Posterior vena cava (tissue), 2 donors: ENCODE measurements at regions of chr1 and their contacts with region 1.

Region 1: GRCh38 chr1:108780937-108781574 is 34.6 kb downstream of the STXBP3 start:
- DNase-seq: no peak

Region 2: DNA sequence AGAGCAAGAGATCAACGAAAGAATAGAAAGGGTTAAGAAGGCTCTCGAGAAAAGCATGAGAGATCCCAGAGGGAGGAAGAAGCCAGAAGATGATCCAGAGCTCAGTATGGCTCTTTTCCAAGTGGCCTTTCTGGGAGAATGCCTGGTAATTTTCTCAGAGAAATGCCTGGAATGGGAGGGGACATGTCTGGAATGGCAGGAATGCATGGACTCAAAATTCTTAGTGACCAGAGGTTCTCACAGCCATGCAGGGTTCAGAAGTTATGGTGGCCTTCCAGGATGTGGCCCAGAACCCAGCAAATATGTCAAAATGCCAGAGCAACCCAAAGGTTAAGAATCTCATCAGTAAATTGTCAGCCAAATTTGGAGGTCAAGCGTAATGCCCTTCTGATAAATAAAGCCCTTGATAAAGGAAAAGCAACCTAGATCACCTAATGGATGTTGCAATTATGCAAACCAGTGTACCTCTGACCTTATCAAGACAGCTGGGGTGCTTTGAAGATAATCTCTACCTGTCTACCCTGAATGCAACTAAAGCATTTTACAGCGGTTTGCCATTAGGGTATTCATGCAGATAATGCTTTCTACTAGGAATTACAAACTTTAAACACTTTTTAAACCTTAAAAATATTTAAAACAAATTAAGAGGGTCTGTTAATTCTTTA is 277.8 kb before region 1 on chr1:
- intact Hi-C with region 1: no loop called
- DNase-seq: no peak

Region 3: DNA sequence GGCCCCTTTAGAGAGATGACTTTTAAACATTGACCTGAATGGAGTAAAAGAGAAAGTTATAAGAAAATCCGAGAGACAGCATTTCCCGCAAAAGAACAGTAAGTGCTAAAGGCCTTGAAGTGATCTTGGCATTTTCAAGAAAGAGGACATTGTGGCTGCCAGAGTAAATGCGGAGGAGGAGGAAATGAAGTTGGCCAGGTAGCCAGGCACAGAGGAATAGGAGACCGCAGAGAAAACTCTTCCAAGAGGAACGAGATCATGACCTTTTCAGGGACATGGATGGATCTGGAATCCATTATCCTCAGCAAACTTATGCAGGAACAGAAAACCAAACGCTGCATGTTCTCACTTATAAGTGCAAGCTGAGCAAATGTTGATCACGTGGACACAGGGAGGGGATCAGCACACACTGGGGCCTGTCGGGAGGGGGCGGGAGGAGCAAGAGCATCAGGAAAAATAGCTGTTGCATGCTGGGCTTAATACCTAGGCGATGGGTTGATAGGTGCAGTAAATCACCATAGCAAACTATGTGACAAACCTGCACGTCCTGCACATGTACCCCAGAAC is 171.5 kb before region 1 on chr1:
- intact Hi-C with region 1: no loop called
- DNase-seq: no peak

Region 4: GRCh38 chr1:108670131-108670773 is 110.8 kb before region 1 on chr1:
- intact Hi-C with region 1: no loop called
- DNase-seq: no peak

Region 5: GRCh38 chr1:108913105-108913948 is 132.3 kb after region 1 on chr1:
- intact Hi-C with region 1: loop called in 1 of 2 experiments (anchors 10 kb)
- DNase-seq: no peak